Activated naive CD4-positive, alpha-beta T cell treated with anti-CD3 and anti-CD28 coated beads for 36 hours (primary cell): ENCODE measurements at regions of chr18 and their contacts with region 1.

Region 1: DNA sequence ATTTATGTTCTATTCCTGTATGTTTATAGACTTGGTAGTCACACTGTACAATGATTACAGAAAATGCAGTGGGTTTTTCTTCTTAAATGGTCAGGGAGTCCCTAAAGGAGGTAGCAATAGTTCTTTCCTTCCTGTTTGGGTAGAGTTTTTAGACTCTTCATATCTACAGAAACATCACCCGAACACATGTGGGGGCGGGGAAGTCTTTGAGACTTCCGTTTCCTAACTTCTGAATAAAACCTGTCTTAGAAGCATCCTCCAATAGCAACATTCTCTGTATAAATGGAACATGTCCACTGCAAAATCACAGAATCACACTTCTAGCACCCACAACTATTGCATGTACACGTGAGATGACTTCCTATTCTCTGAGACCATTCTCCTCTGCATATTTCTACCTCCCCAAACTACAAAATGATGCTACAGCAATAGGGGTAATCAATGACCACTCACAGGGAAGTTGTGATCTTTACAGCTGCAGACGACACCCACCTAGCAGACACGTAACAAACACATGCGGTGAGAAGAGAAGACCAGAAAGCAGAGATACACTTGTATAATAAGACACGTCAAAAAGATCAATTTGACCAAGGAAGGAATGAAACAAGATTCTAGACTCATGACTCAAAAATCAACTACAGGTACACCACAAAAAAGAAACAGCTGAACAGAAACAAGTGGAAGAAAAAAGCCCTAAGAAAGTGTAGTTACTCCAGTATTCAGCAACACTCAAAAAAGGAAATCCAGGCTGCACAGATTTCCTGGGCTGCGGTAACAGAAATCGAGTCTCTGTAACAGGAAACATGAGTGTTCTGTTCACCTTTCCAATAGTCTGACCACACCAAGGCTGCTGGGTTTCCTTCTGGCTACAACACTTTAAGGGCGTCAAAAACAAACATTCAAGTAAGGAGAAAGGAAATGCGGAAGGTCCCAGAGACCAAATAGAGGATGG is 120.4 kb downstream of the ZNF516 start:
- DNase-seq: peak; percentile 80
- H3K4me3 Mint-ChIP-seq: no peak overlapping the region
- H3K27ac Mint-ChIP-seq: peak overlapping the region; percentile 74
- H3K4me1 Mint-ChIP-seq: peaks cover 46% of the 10 kb centered on the region
- H3K27me3 Mint-ChIP-seq: peaks cover 2% of the 10 kb centered on the region

Region 2: GRCh38 chr18:75261430-75262223 is 1113.0 kb before region 1 on chr18:
- CTCF ChIA-PET with region 1: no interaction called
- intact Hi-C with region 1: loop called (anchors 10 kb)
- DNase-seq: peak; percentile 23
- H3K4me3 Mint-ChIP-seq: no peak overlapping the region
- H3K27ac Mint-ChIP-seq: peak overlapping the region; percentile 63
- H3K4me1 Mint-ChIP-seq: peaks cover 46% of the 10 kb centered on the region
- H3K27me3 Mint-ChIP-seq: no peaks in the 10 kb centered on the region

Region 3: DNA sequence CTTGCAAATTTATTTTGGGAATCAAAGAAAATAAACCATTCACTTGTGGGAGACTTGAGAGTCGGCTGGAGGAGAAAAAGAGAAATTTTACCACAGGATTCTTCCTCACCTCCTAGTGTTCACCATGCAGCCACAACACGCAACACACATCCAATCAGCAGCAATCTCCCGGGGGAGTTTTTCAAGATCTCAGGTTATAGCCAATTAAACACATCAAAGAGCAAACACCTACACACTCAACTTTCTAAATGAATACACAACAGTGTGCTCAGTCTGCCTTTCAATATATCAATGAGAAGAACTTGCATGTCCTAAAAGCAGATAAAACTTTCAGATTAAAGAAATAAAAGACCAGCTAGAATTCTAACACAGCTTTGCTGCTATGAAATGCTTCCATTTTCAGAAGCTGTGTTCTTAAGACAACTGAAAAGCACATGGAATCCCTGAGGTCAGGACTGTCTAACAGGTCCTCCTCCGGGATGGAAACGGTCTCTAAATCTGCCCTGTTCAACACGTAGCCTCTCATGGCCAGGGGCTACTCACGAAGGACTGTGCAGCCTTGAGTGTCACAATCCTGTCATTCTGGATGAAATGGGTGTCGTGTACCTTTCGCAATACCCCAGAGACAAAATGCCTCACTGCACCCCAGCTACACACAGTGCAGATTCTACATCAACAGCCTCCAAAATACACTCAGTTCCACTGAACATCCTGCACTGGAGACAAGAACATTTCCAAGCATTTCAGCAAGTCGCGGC is 36.2 kb after region 1 on chr18:
- CTCF ChIA-PET with region 1: no interaction called
- intact Hi-C with region 1: loop called (anchors 1 kb)
- DNase-seq: peak; percentile 55
- H3K4me3 Mint-ChIP-seq: no peak overlapping the region
- H3K27ac Mint-ChIP-seq: no peak overlapping the region
- H3K4me1 Mint-ChIP-seq: peaks cover 21% of the 10 kb centered on the region
- H3K27me3 Mint-ChIP-seq: no peaks in the 10 kb centered on the region

Region 4: GRCh38 chr18:76859474-76860339 is 485.1 kb after region 1 on chr18:
- CTCF ChIA-PET with region 1: no interaction called
- intact Hi-C with region 1: loop called (anchors 1 kb)
- DNase-seq: peak; percentile 66
- H3K4me3 Mint-ChIP-seq: no peak overlapping the region
- H3K27ac Mint-ChIP-seq: peak overlapping the region; percentile 54
- H3K4me1 Mint-ChIP-seq: peaks cover 22% of the 10 kb centered on the region
- H3K27me3 Mint-ChIP-seq: no peaks in the 10 kb centered on the region